ENCODE measurements at regions of chr6 and their contacts with region 1.

Region 1: GRCh38 chr6:35731736-35732532 is 4.9 kb upstream of the ARMC12 start:
- DNase-seq: peak; percentile 94
- H3K4me3 Mint-ChIP-seq: peak overlapping the region; percentile 82
- H3K27ac Mint-ChIP-seq: peak overlapping the region; percentile 86
- H3K4me1 Mint-ChIP-seq: peaks cover 55% of the 10 kb centered on the region
- H3K27me3 Mint-ChIP-seq: no peaks in the 10 kb centered on the region

Region 2: GRCh38 chr6:35275744-35276260 is 456.1 kb before region 1 on chr6:
- intact Hi-C with region 1: no loop called
- DNase-seq: no peak
- H3K4me3 Mint-ChIP-seq: no peak overlapping the region
- H3K27ac Mint-ChIP-seq: no peak overlapping the region
- H3K4me1 Mint-ChIP-seq: peaks cover 4% of the 10 kb centered on the region
- H3K27me3 Mint-ChIP-seq: no peaks in the 10 kb centered on the region

Region 3: GRCh38 chr6:35569011-35569461 is 162.9 kb before region 1 on chr6:
- intact Hi-C with region 1: loop called (anchors 5 kb)
- DNase-seq: no peak
- H3K4me3 Mint-ChIP-seq: no peak overlapping the region
- H3K27ac Mint-ChIP-seq: no peak overlapping the region
- H3K4me1 Mint-ChIP-seq: no peaks in the 10 kb centered on the region
- H3K27me3 Mint-ChIP-seq: peaks cover 13% of the 10 kb centered on the region

Region 4: GRCh38 chr6:35624341-35625070 is 107.4 kb before region 1 on chr6:
- intact Hi-C with region 1: no loop called
- DNase-seq: no peak
- H3K4me3 Mint-ChIP-seq: no peak overlapping the region
- H3K27ac Mint-ChIP-seq: peak overlapping the region; percentile 12
- H3K4me1 Mint-ChIP-seq: peaks cover 6% of the 10 kb centered on the region
- H3K27me3 Mint-ChIP-seq: no peaks in the 10 kb centered on the region

Region 5: DNA sequence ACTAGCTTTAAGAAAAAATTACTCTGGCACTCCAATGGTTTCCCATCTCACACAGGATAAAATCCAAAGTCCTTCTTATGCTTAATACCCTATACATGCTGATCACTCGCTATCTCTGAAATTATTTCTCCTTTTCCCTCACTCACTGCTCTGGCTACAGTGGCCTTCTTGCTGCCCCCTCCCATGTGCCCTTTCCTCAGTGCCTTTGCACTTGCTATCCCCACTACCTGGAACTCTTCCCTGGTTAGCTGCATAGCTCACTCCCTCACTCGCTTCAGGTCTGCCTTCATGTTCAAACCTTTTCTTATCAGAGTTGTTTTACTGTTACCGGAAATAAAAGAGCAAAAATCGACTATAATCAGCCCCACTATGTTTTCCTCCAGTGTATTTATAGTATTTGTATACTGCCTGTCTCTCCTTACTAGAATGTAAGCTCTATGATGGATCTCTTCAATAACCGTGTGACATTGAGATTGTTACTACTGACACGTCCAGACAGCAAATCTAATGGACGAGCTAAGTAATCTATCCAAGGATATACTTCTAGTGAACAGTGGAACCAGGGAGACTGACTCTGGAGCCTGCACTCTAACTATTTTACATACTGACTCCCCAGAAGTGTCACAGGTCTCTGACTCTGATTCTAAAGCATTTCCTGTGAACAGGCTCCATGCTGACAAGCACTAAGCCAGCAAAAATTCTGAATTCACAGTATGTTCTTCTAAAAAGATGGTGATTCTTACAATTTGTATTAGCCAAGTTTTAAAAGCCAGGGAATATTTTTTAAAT is 68.3 kb before region 1 on chr6:
- intact Hi-C with region 1: loop called (anchors 2 kb)
- DNase-seq: no peak
- H3K4me3 Mint-ChIP-seq: no peak overlapping the region
- H3K27ac Mint-ChIP-seq: no peak overlapping the region
- H3K4me1 Mint-ChIP-seq: peaks cover 8% of the 10 kb centered on the region
- H3K27me3 Mint-ChIP-seq: no peaks in the 10 kb centered on the region

Region 6: GRCh38 chr6:35688581-35689322 is 43.2 kb before region 1 on chr6 and contains the start of gene FKBP5:
- intact Hi-C with region 1: loop called (anchors 2 kb)
- DNase-seq: peak; percentile 86
- H3K4me3 Mint-ChIP-seq: peak within 1 kb of the TSS; percentile 92
- H3K27ac Mint-ChIP-seq: peak within 1 kb of the TSS; percentile 87
- H3K4me1 Mint-ChIP-seq: peaks cover 13% of the 10 kb centered on the region
- H3K27me3 Mint-ChIP-seq: no peaks in the 10 kb centered on the region
- total RNA-seq, gene FKBP5: 88.1 and 90.9 TPM in 2 replicates

Region 7: GRCh38 chr6:35719830-35720733 is 11.9 kb before region 1 on chr6:
- intact Hi-C with region 1: loop called (anchors 1 kb)
- DNase-seq: no peak
- H3K4me3 Mint-ChIP-seq: peak overlapping the region; percentile 40
- H3K27ac Mint-ChIP-seq: peak overlapping the region; percentile 95
- H3K4me1 Mint-ChIP-seq: peaks cover 43% of the 10 kb centered on the region
- H3K27me3 Mint-ChIP-seq: no peaks in the 10 kb centered on the region